GM12878 (cell line): ENCODE measurements at regions of chr5 and their contacts with region 1.

Region 1: DNA sequence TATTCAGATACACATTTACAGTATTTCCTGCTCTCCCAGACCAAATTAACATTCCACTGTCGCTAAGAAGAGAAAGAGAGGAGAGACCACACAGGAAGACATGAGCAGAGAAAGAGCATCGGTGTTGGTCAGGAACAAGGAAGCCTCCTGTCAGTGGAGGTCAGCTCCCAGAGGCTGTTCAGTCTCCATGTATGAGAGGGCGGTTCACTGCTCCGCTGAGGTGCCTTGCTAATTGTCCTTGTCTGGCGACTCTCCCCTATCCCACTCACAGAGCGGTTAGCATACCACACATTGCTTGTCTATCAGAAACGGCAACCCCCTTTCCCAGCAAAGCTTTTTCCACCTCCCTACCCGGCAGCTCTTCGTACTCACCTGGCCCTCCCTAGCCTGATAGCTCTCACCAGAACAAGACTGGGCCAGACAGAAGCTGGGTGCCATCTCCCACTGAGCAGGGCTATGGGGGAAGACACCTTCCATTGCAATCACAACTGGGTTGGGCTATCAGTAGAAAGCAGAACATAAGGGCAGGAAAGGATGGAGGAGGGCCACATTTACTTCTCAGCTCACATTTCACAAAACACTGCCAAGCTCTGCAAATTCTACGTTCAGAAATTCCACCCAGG is 58.6 kb upstream of the LMNB1 start:
- DNase-seq: no peak
- ATAC-seq: no peak; the same call in 2 of the 3 replicates
- H3K4me3 ChIP-seq: no peak overlapping the region
- H3K27ac ChIP-seq: no peak overlapping the region
- H3K4me1 ChIP-seq: no peaks in the 10 kb centered on the region
- H3K27me3 ChIP-seq: no peaks in the 10 kb centered on the region
- CTCF ChIP-seq: no peak
- EP300 ChIP-seq: no peak
- POLR2A ChIP-seq: no peak
- RAD21 ChIP-seq: no peak

Region 2: GRCh38 chr5:126395198-126395597 is 323.2 kb before region 1 on chr5:
- CTCF ChIA-PET with region 1: no interaction called
- POLR2A ChIA-PET with region 1: interaction called, 12 read pairs
- RAD21 ChIA-PET with region 1: no interaction called
- SMC1A ChIA-PET with region 1: no interaction called
- in situ Hi-C with region 1: no loop called
- intact Hi-C with region 1: no loop called
- DNase-seq: no peak
- ATAC-seq: no peak
- H3K4me3 ChIP-seq: no peak overlapping the region
- H3K27ac ChIP-seq: no peak overlapping the region
- H3K4me1 ChIP-seq: no peaks in the 10 kb centered on the region
- H3K27me3 ChIP-seq: no peaks in the 10 kb centered on the region; a peak in 1 of 4 replicates
- CTCF ChIP-seq: no peak
- EP300 ChIP-seq: no peak
- POLR2A ChIP-seq: no peak
- RAD21 ChIP-seq: no peak

Region 3: GRCh38 chr5:126659805-126660482 is 58.4 kb before region 1 on chr5:
- CTCF ChIA-PET with region 1: no interaction called
- POLR2A ChIA-PET with region 1: no interaction called
- RAD21 ChIA-PET with region 1: no interaction called
- SMC1A ChIA-PET with region 1: no interaction called
- in situ Hi-C with region 1: no loop called
- intact Hi-C with region 1: no loop called
- DNase-seq: no peak
- ATAC-seq: peak; percentile 87
- H3K4me3 ChIP-seq: no peak overlapping the region
- H3K27ac ChIP-seq: no peak overlapping the region
- H3K4me1 ChIP-seq: no peaks in the 10 kb centered on the region
- H3K27me3 ChIP-seq: no peaks in the 10 kb centered on the region
- CTCF ChIP-seq: no peak
- EP300 ChIP-seq: no peak
- POLR2A ChIP-seq: no peak
- RAD21 ChIP-seq: no peak

Region 4: DNA sequence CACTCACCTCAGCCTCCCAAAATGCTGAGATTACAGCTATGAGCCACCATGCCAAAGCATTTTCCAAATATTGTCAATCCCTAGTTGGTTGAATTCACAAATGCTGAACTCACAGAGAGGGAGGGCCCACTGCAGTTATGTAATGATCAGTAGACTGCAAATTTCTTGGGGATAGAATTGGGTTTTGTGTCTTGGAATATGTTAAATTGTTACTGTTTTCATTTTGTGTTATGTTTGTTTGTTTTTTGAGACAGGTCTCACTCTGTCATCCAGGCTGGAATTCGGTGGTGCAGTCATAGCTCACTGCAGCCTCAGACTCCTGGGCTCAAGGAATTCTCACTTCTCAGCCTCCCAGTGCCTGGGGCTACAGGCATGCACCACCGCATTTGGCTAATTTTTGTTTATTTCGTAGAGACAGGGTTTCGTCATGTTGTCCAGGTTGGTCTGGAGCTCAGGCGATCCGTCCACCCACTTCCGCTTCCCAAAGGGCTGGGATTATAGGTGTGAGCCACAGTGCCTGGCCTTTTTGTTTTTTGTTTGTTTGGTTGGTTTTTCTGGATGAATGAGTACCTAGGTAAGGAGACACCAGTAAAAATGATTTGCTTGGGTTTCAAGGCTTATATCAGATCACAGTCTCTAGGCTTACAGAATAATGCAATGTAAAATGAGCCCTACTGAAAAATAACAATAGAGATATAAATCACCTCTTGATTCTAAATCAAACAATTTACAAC is 27.1 kb after region 1 on chr5:
- CTCF ChIA-PET with region 1: no interaction called
- POLR2A ChIA-PET with region 1: interaction called, 3 read pairs
- RAD21 ChIA-PET with region 1: no interaction called
- SMC1A ChIA-PET with region 1: interaction called, 4 read pairs
- in situ Hi-C with region 1: no loop called
- intact Hi-C with region 1: loop called (anchors 5 kb)
- DNase-seq: no peak
- ATAC-seq: no peak
- H3K4me3 ChIP-seq: no peak overlapping the region
- H3K27ac ChIP-seq: no peak overlapping the region
- H3K4me1 ChIP-seq: peaks cover 16% of the 10 kb centered on the region
- H3K27me3 ChIP-seq: no peaks in the 10 kb centered on the region
- CTCF ChIP-seq: no peak
- EP300 ChIP-seq: no peak
- POLR2A ChIP-seq: no peak
- RAD21 ChIP-seq: no peak

Region 5: GRCh38 chr5:126753227-126753626 is 34.9 kb after region 1 on chr5:
- CTCF ChIA-PET with region 1: no interaction called
- POLR2A ChIA-PET with region 1: interaction called, 10 read pairs
- RAD21 ChIA-PET with region 1: interaction called, 3 read pairs
- SMC1A ChIA-PET with region 1: interaction called, 4 read pairs
- in situ Hi-C with region 1: no loop called
- intact Hi-C with region 1: loop called (anchors 5 kb)
- DNase-seq: no peak
- ATAC-seq: no peak
- H3K4me3 ChIP-seq: no peak overlapping the region
- H3K27ac ChIP-seq: no peak overlapping the region
- H3K4me1 ChIP-seq: peaks cover 14% of the 10 kb centered on the region
- H3K27me3 ChIP-seq: no peaks in the 10 kb centered on the region
- CTCF ChIP-seq: no peak
- EP300 ChIP-seq: no peak
- POLR2A ChIP-seq: no peak
- RAD21 ChIP-seq: no peak

Region 6: GRCh38 chr5:126927429-126927828 is 209.1 kb after region 1 on chr5:
- CTCF ChIA-PET with region 1: no interaction called
- POLR2A ChIA-PET with region 1: no interaction called
- RAD21 ChIA-PET with region 1: no interaction called
- SMC1A ChIA-PET with region 1: no interaction called
- in situ Hi-C with region 1: no loop called
- intact Hi-C with region 1: no loop called
- DNase-seq: no peak
- ATAC-seq: no peak
- H3K4me3 ChIP-seq: no peak overlapping the region
- H3K27ac ChIP-seq: no peak overlapping the region
- H3K4me1 ChIP-seq: no peaks in the 10 kb centered on the region
- H3K27me3 ChIP-seq: no peaks in the 10 kb centered on the region
- CTCF ChIP-seq: no peak
- EP300 ChIP-seq: no peak
- POLR2A ChIP-seq: no peak
- RAD21 ChIP-seq: no peak